WTC11 (cell line): ENCODE measurements at regions of chr6 and their contacts with region 1.

Region 1: GRCh38 chr6:157832250-157832967 is 9.4 kb downstream of the SNX9 start:
- DNase-seq: no peak
- ATAC-seq: no peak
- H3K4me3 Mint-ChIP-seq: peak overlapping the region; percentile 51; the same call in 1 of the 2 replicates
- H3K27ac Mint-ChIP-seq: peak overlapping the region; percentile 95
- H3K4me1 Mint-ChIP-seq: peaks cover 81% of the 10 kb centered on the region
- H3K27me3 Mint-ChIP-seq: no peaks in the 10 kb centered on the region
- CTCF ChIP-seq: no peak

Region 2: GRCh38 chr6:158086504-158087223 is 254.3 kb after region 1 on chr6:
- CTCF ChIA-PET with region 1: no interaction called
- POLR2A ChIA-PET with region 1: interaction called, 12 read pairs
- DNase-seq: no peak
- ATAC-seq: no peak
- H3K4me3 Mint-ChIP-seq: no peak overlapping the region
- H3K27ac Mint-ChIP-seq: no peak overlapping the region
- H3K4me1 Mint-ChIP-seq: no peaks in the 10 kb centered on the region
- H3K27me3 Mint-ChIP-seq: no peaks in the 10 kb centered on the region
- CTCF ChIP-seq: no peak